Activated T-helper 2 cell treated with anti-CD3 and anti-CD28 coated beads, Interferon-gamma antibody, Interleukin-2, Interleukin-4, amounts not matched to agents 10 μg/mL and 5 μg/mL and 100 μg/mL, durations not matched to agents 14 hours and 24 hours and 36 hours (primary cell): ENCODE measurements at regions of chr22 and their contacts with region 1.

Region 1: GRCh38 chr22:37807410-37808293 is at the start of gene GCAT:
- DNase-seq: peak; percentile 88
- H3K4me3 Mint-ChIP-seq: peak within 1 kb of the TSS; percentile 77
- H3K27ac Mint-ChIP-seq: no peak within 1 kb of the TSS
- H3K4me1 Mint-ChIP-seq: peaks cover 36% of the 10 kb centered on the region
- H3K27me3 Mint-ChIP-seq: peaks cover 26% of the 10 kb centered on the region
- total RNA-seq, gene GCAT: 24.2 and 25.5 TPM in 2 replicates

Region 2: GRCh38 chr22:37745548-37746365 is 61.9 kb before region 1 on chr22:
- intact Hi-C with region 1: loop called (anchors 10 kb)
- DNase-seq: peak; percentile 84
- H3K4me3 Mint-ChIP-seq: peak overlapping the region; percentile 90
- H3K27ac Mint-ChIP-seq: peak overlapping the region; percentile 80
- H3K4me1 Mint-ChIP-seq: peaks cover 26% of the 10 kb centered on the region
- H3K27me3 Mint-ChIP-seq: no peaks in the 10 kb centered on the region

Region 3: GRCh38 chr22:37843741-37843990 is 36.0 kb after region 1 on chr22:
- intact Hi-C with region 1: loop called (anchors 5 kb)
- DNase-seq: peak; percentile 58
- H3K4me3 Mint-ChIP-seq: peak overlapping the region; percentile 87
- H3K27ac Mint-ChIP-seq: peak overlapping the region; percentile 88
- H3K4me1 Mint-ChIP-seq: peaks cover 22% of the 10 kb centered on the region
- H3K27me3 Mint-ChIP-seq: no peaks in the 10 kb centered on the region